Panc1 (cell line): ENCODE measurements at regions of chr12 and their contacts with region 1.

Region 1: GRCh38 chr12:132956011-132956788 is at the start of gene ZNF605:
- DNase-seq: peak; percentile 10
- ATAC-seq: peak; percentile 92
- H3K4me3 ChIP-seq: peak within 1 kb of the TSS; percentile 82 to 85
- H3K27ac ChIP-seq: peak within 1 kb of the TSS; percentile 93
- H3K4me1 ChIP-seq: 0 out of 2 replicates have a peak, but pooled peaks cover 6% of the 10 kb centered on the region
- H3K27me3 ChIP-seq: no peaks in the 10 kb centered on the region
- CTCF ChIP-seq: no peak
- total RNA-seq, gene ZNF605: 20.6 TPM

Region 2: DNA sequence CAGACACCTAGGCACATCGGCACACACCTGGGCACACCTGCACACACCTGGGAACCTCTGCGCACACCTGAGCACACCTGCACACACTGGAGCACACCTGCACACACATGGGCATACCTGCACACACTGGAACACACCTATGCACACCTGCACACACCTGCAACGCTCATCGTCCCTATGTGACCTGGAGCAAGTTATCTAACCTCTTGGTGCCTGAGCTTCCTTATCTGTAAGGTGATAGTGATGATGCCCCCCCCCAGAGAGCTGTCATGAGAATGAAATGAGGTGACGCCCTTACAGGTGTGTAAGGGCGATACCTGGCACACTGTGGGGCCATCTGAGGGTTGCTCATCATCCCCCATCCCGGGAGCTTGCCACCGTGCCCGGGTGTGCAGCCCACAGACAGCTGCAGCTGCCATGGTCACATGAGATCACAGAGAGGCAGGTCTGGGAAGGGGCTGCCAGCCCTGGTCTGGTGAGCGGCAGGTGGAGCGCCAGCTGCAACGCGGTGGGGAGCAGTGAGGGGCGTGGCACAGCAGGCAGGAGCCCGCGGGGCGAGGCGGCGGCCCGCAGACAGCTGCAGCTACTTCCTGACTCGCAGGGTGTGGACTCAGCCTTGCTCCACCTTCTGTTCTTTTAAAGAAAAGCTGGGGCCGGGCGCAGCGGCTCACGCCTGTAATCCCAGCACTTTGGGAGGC is 526.1 kb before region 1 on chr12:
- CTCF ChIA-PET with region 1: no interaction called
- POLR2A ChIA-PET with region 1: no interaction called
- in situ Hi-C with region 1: no loop called
- intact Hi-C with region 1: no loop called
- DNase-seq: no peak
- ATAC-seq: peak; percentile 55
- H3K4me3 ChIP-seq: no peak overlapping the region
- H3K27ac ChIP-seq: no peak overlapping the region
- H3K4me1 ChIP-seq: peaks cover 10% of the 10 kb centered on the region
- H3K27me3 ChIP-seq: no peaks in the 10 kb centered on the region
- CTCF ChIP-seq: no peak

Region 3: DNA sequence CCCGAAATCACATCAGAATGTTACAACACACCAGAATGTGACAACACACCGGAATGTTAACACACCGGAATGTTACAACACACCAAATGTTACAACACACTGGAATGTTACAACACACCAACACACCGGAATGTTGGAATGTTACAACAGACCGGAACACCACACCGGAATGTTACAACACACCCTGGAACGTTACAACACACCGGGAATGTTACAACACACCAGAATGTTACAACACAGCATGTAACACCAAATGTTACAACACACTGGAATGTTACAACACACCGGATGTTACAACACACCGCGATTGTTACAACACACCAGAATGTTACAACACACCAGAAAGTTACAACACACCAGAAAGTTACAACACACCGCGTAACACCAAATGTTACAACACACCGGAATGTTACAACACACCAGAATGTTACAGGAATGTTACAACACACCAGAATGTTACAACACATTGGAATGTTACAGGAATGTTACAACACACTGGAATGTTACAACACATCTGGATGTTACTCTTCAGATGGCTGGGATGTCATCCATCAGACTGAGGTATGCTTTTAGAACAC is 89.9 kb before region 1 on chr12:
- CTCF ChIA-PET with region 1: no interaction called
- POLR2A ChIA-PET with region 1: interaction called, 11 read pairs
- in situ Hi-C with region 1: no loop called
- intact Hi-C with region 1: no loop called
- DNase-seq: no peak
- ATAC-seq: no peak
- H3K4me3 ChIP-seq: no peak overlapping the region
- H3K27ac ChIP-seq: no peak overlapping the region
- H3K4me1 ChIP-seq: no peaks in the 10 kb centered on the region
- H3K27me3 ChIP-seq: no peaks in the 10 kb centered on the region
- CTCF ChIP-seq: no peak

Region 4: GRCh38 chr12:133135747-133136146 is 179.5 kb after region 1 on chr12:
- CTCF ChIA-PET with region 1: no interaction called
- POLR2A ChIA-PET with region 1: no interaction called
- in situ Hi-C with region 1: no loop called
- intact Hi-C with region 1: no loop called
- DNase-seq: no peak
- ATAC-seq: no peak
- H3K4me3 ChIP-seq: no peak overlapping the region
- H3K27ac ChIP-seq: no peak overlapping the region
- H3K4me1 ChIP-seq: peaks cover 6% of the 10 kb centered on the region; the same call in 1 of the 2 replicates
- H3K27me3 ChIP-seq: no peaks in the 10 kb centered on the region
- CTCF ChIP-seq: no peak

Region 5: DNA sequence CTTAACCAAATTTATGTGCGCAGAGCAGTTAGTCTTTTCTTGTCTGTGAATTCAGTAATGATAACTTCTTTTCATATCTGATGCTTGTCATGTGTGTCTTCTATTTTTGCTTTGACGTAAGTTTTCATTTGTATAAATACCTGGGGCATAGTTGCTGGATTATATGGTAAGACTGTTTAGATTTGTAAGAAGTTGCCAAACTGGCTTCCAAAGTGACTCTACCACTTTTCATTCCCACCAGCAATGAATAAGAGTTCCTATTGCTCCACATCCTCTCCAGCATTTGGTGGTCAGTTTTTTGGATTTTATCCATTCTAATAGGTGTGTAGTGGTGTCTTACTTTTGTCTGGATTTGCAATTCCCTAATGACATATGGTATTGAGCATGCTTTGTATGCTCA is 234.0 kb after region 1 on chr12:
- CTCF ChIA-PET with region 1: no interaction called
- POLR2A ChIA-PET with region 1: interaction called, 15 read pairs
- in situ Hi-C with region 1: no loop called
- intact Hi-C with region 1: no loop called
- DNase-seq: no peak
- ATAC-seq: no peak
- H3K4me3 ChIP-seq: no peak overlapping the region
- H3K27ac ChIP-seq: no peak overlapping the region
- H3K4me1 ChIP-seq: no peaks in the 10 kb centered on the region
- H3K27me3 ChIP-seq: no peaks in the 10 kb centered on the region
- CTCF ChIP-seq: no peak